Vagina (tissue), 2 donors: ENCODE measurements at regions of chr7 and their contacts with region 1.

Region 1: DNA sequence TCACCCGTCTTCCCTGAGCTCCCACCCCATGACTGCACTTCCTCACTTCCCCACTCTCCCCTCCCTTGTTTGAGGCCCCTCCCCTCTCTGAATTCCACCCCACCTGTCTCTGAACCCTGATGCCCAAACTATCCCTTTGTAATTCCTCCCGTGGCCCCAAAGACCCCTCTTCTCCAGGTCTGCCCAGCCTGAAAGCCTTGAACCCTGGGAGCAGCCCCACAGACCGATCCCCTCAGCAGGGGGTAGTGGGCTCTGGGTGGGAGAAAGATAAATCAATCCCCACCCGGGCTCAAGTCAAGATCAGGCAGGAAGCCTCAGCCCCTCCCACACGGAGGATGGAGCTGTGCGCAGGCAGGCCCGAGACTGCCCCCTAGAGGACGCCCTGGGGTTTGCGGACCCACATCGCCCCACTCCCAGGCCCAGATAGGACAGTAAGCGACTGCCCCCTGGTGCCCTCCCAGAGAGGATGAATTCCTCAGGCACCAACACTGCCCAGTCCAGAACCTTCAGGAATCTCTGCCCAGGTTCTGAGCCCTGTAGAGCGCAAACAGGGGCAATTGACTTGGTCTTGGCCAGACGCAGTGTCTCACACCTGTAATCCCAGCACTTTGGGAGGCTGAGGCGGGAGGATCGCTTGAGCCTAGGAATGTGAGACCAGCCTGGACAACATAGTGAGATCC is 11.7 kb downstream of the HSPB1 start:
- DNase-seq: no peak
- H3K4me3 ChIP-seq: no peak overlapping the region
- H3K27ac ChIP-seq: peak overlapping the region; percentile 100
- H3K4me1 ChIP-seq: peaks cover 20% of the 10 kb centered on the region
- H3K27me3 ChIP-seq: no peaks in the 10 kb centered on the region
- CTCF ChIP-seq: peak; percentile 100
- POLR2A ChIP-seq: no peak

Region 2: GRCh38 chr7:76291343-76292212 is 22.6 kb before region 1 on chr7:
- intact Hi-C with region 1: loop called (anchors 1 kb)
- DNase-seq: peak in 1 of 2 donors; percentile 99
- H3K4me3 ChIP-seq: peak overlapping the region; percentile 29
- H3K27ac ChIP-seq: peak overlapping the region; percentile 100
- H3K4me1 ChIP-seq: peaks cover 58% of the 10 kb centered on the region
- H3K27me3 ChIP-seq: no peaks in the 10 kb centered on the region
- CTCF ChIP-seq: peak; percentile 91 to 99 (median 96)
- POLR2A ChIP-seq: peak in 1 of 2 donors; percentile 1

Region 3: GRCh38 chr7:76302347-76303201 is 11.6 kb before region 1 on chr7 and contains the start of gene HSPB1:
- intact Hi-C with region 1: no loop called
- DNase-seq: no peak
- H3K4me3 ChIP-seq: peak within 1 kb of the TSS; percentile 84 to 90
- H3K27ac ChIP-seq: peak within 1 kb of the TSS; percentile 100
- H3K4me1 ChIP-seq: peaks cover 57% of the 10 kb centered on the region
- H3K27me3 ChIP-seq: no peaks in the 10 kb centered on the region
- CTCF ChIP-seq: peak in 1 of 3 experiments; percentile 17
- POLR2A ChIP-seq: peak; percentile 75 to 92
- total RNA-seq, gene HSPB1: 3,606 TPM

Region 4: DNA sequence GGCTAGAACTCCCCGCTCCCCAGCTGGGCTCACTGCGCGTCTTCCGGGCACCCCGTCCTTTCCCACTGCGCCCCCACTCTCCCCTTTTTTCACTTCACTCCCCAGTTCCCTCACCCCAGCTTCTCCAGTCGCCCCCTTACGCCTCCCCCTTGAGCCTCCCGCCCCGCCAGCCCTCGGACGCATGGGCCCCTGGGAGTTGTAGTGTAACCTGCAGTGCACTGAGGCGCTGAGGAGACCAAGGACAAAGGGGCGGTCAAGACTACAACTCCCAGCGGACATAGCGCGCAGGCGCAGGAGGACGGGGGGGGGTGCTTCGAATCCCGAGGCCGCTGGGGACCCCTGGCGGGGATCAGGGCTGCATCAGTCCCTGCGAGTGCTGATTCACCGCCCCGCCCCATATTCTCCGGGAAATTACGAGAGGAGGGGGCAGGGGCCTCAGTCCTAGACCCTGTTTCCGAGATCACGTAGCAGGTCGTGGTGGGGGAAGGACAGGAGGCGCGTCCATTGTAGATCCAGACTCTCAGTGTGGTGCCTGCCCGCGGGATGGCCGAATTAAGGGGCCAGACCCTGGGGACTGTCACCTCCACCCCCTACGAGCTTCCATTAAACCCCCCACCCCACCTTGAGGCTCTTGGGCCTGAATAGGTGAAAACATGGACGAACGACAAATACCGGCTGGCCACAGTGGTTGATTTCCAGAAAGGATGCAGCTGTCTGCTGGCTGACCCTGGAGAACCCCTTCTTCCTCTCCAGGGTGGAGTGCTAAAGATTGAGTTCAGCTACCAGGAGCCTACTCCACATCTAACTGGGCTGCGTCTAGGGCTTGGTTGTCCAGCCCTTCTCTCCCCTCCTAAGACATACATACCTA is 45.2 kb after region 1 on chr7:
- intact Hi-C with region 1: loop called (anchors 2 kb)
- DNase-seq: peak; percentile 98 to 99
- H3K4me3 ChIP-seq: peak overlapping the region; percentile 82 to 91
- H3K27ac ChIP-seq: peak overlapping the region; percentile 100
- H3K4me1 ChIP-seq: peaks cover 41% of the 10 kb centered on the region
- H3K27me3 ChIP-seq: no peaks in the 10 kb centered on the region
- CTCF ChIP-seq: peak in 2 of 3 experiments; percentile 65 to 82
- POLR2A ChIP-seq: no peak